Activated T-helper 1 cell treated with anti-CD3 and anti-CD28 coated beads, Interleukin-12 subunit alpha, Interleukin-12 subunit beta, Interleukin-2, Interleukin-4 antibody, amounts not matched to agents 30 ng/mL and 10 ng/mL and 1 ng/mL, durations not matched to agents 14 hours and 24 hours and 36 hours (primary cell): ENCODE measurements at regions of chr20 and their contacts with region 1.

Region 1: DNA sequence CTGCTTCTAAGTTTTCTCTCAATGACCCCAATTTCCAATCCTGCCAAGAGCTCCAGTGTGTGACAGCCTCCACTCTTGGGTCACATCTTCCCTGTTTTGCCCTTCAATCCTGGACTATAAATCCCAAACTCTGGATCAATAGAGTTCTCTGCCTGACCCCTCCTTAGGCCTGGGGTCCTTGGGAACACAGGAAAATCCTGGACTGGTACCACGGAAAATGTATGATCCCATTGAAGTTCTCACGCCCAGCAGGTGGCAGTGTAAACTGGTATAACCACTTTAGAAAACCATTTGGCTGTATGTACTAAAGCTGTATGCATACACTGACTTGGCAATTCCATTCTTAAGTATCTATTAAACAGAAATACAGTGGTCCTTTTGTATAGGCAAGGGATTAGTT is 98.0 kb downstream of the SNAP25 start:
- DNase-seq: no peak
- H3K4me3 Mint-ChIP-seq: no peak overlapping the region
- H3K27ac Mint-ChIP-seq: no peak overlapping the region
- H3K4me1 Mint-ChIP-seq: no peaks in the 10 kb centered on the region
- H3K27me3 Mint-ChIP-seq: peaks cover 3% of the 10 kb centered on the region

Region 2: GRCh38 chr20:10427060-10427692 is 110.6 kb after region 1 on chr20:
- intact Hi-C with region 1: loop called (anchors 1 kb)
- DNase-seq: no peak
- H3K4me3 Mint-ChIP-seq: no peak overlapping the region
- H3K27ac Mint-ChIP-seq: no peak overlapping the region
- H3K4me1 Mint-ChIP-seq: peaks cover 10% of the 10 kb centered on the region
- H3K27me3 Mint-ChIP-seq: no peaks in the 10 kb centered on the region

Region 3: GRCh38 chr20:10536531-10536930 is 219.9 kb after region 1 on chr20:
- intact Hi-C with region 1: loop called (anchors 2 kb)
- DNase-seq: no peak
- H3K4me3 Mint-ChIP-seq: no peak overlapping the region
- H3K27ac Mint-ChIP-seq: no peak overlapping the region
- H3K4me1 Mint-ChIP-seq: peaks cover 15% of the 10 kb centered on the region
- H3K27me3 Mint-ChIP-seq: no peaks in the 10 kb centered on the region